Activated T-helper 1 cell treated with anti-CD3 and anti-CD28 coated beads, Interleukin-12 subunit alpha, Interleukin-12 subunit beta, Interleukin-2, Interleukin-4 antibody, amounts not matched to agents 30 ng/mL and 10 ng/mL and 1 ng/mL, durations not matched to agents 14 hours and 24 hours and 36 hours (primary cell): ENCODE measurements at regions of chr10 and their contacts with region 1.

Region 1: DNA sequence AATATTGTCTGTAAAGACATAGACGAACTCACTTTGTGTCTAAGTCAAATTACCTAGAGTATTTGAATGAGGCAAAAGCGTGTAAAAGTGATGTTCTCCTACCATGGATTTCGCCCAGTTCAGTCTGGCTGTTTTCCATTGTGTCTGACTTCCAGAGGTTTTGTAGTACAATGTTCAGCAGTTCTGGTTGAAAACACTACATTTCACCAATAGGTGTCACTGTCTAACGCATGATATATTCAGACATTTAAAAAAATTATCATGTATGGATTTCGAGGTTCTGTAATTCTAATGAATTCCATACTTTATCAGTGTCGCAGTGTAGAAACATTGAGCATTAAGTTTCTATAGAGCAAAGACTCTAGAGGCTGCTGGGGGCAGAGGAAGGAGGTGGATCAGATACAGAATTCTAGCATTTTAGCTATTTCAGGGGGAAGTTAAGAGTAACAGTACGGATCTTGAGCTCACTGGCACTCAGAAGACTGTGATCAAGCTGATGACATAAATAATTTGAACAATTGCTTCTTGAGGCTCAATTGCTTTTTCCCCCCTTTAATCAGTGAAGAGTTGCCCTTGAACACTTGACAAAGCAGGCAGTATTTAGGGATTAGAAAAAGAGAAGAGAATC is 196.9 kb upstream of the RHOBTB1 start:
- DNase-seq: no peak
- H3K4me3 Mint-ChIP-seq: no peak overlapping the region
- H3K27ac Mint-ChIP-seq: no peak overlapping the region
- H3K4me1 Mint-ChIP-seq: no peaks in the 10 kb centered on the region
- H3K27me3 Mint-ChIP-seq: peaks cover 10% of the 10 kb centered on the region

Region 2: GRCh38 chr10:61733358-61733940 is 592.6 kb after region 1 on chr10:
- intact Hi-C with region 1: loop called (anchors 5 kb)
- DNase-seq: no peak
- H3K4me3 Mint-ChIP-seq: no peak overlapping the region
- H3K27ac Mint-ChIP-seq: no peak overlapping the region
- H3K4me1 Mint-ChIP-seq: no peaks in the 10 kb centered on the region
- H3K27me3 Mint-ChIP-seq: peaks cover 39% of the 10 kb centered on the region